ENCODE measurements at regions of chr3 and their contacts with region 1.

Region 1: DNA sequence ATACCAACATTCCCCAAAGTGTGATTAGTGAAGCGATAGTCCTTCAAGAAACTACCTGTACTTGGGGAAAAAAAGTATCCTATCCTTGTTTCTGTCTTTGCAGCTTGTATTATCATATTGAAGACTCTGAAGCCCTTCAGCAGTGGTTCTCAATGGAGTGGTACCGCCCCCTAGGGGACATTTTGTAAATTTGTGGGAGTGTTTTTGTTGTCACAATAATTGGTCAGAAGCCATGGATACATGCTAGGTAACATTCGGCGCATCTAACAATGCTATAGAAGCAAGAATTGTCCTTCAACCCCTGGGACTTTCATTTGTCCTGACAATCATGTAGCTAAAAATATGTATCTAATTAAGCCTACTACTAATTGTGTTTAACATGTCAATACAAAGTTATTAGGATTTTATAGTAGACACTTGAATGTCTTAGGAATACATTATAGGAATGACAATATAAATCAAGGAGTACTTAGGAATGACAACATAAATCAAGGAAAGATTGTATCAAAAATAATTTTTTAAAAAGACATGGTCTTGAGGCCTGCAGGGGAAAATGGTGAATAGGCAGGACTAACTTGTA is 53.7 kb downstream of the NMD3 start:
- DNase-seq: peak; percentile 32
- CTCF ChIP-seq: peak; percentile 32

Region 2: GRCh38 chr3:160948272-160948671 is 326.5 kb before region 1 on chr3:
- CTCF ChIA-PET with region 1: interaction called, 14 read pairs
- POLR2A ChIA-PET with region 1: no interaction called
- DNase-seq: no peak
- CTCF ChIP-seq: no peak

Region 3: GRCh38 chr3:160956806-160957205 is 318.0 kb before region 1 on chr3:
- CTCF ChIA-PET with region 1: interaction called, 38 read pairs
- POLR2A ChIA-PET with region 1: no interaction called
- DNase-seq: peak; percentile 29
- CTCF ChIP-seq: peak; percentile 55

Region 4: GRCh38 chr3:161153480-161153879 is 121.3 kb before region 1 on chr3:
- CTCF ChIA-PET with region 1: no interaction called
- POLR2A ChIA-PET with region 1: no interaction called
- DNase-seq: no peak
- CTCF ChIP-seq: no peak

Region 5: GRCh38 chr3:161284989-161285388 is 10.2 kb after region 1 on chr3:
- CTCF ChIA-PET with region 1: interaction called, 14 read pairs
- POLR2A ChIA-PET with region 1: no interaction called
- DNase-seq: no peak
- CTCF ChIP-seq: no peak

Region 6: DNA sequence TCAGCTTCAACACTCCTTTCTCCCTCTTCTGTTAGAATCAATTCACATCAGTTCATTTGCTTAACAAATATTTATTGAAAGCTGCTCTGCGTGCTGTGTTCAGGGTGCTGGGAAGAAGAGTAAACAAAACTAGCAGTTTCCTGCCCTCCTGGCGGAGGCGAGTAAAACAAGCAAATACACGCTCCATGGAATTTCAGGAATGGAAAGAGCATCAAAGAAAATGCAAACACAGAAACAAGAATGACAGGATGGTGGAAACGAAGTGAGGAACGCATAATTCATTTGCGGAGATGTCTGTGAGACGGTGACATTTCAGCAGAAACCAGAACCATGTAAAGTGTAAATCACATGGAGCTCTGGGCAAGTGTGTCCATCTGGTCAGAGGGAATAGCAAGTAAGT is 146.0 kb after region 1 on chr3:
- CTCF ChIA-PET with region 1: interaction called, 13 read pairs
- POLR2A ChIA-PET with region 1: no interaction called
- DNase-seq: no peak
- CTCF ChIP-seq: no peak

Region 7: GRCh38 chr3:161455962-161456361 is 181.2 kb after region 1 on chr3:
- CTCF ChIA-PET with region 1: no interaction called
- POLR2A ChIA-PET with region 1: no interaction called
- DNase-seq: no peak
- CTCF ChIP-seq: no peak

Measured in GM10248 (cell line).